A549 (cell line): ENCODE measurements at regions of chr11 and their contacts with region 1.

Region 1: GRCh38 chr11:119205574-119206510 is at the start of gene CBL:
- DNase-seq: peak; percentile 85 to 91
- ATAC-seq: peak; percentile 92 to 93
- H3K4me3 ChIP-seq: peak within 1 kb of the TSS; percentile 98
- H3K27ac ChIP-seq: peak within 1 kb of the TSS; percentile 94 to 99
- H3K4me1 ChIP-seq: peaks cover 21% of the 10 kb centered on the region
- CTCF ChIP-seq: peak; percentile 73
- EP300 ChIP-seq: no peak
- POLR2A ChIP-seq: peak; percentile 27
- RAD21 ChIP-seq: peak in 1 of 2 experiments; percentile 46; a peak in 4 of 5 replicates
- polyA plus RNA-seq, gene CBL: 14.1 and 14.9 TPM in 2 replicates

Region 2: GRCh38 chr11:119185981-119186634 is 19.7 kb before region 1 on chr11:
- CTCF ChIA-PET with region 1: interaction called, 17 read pairs
- POLR2A ChIA-PET with region 1: no interaction called
- DNase-seq: no peak
- ATAC-seq: no peak
- H3K4me3 ChIP-seq: no peak overlapping the region
- H3K27ac ChIP-seq: no peak overlapping the region; a peak in 1 of 6 replicates
- H3K4me1 ChIP-seq: peaks cover 13% of the 10 kb centered on the region
- CTCF ChIP-seq: no peak
- EP300 ChIP-seq: no peak
- POLR2A ChIP-seq: no peak
- RAD21 ChIP-seq: no peak

Region 3: DNA sequence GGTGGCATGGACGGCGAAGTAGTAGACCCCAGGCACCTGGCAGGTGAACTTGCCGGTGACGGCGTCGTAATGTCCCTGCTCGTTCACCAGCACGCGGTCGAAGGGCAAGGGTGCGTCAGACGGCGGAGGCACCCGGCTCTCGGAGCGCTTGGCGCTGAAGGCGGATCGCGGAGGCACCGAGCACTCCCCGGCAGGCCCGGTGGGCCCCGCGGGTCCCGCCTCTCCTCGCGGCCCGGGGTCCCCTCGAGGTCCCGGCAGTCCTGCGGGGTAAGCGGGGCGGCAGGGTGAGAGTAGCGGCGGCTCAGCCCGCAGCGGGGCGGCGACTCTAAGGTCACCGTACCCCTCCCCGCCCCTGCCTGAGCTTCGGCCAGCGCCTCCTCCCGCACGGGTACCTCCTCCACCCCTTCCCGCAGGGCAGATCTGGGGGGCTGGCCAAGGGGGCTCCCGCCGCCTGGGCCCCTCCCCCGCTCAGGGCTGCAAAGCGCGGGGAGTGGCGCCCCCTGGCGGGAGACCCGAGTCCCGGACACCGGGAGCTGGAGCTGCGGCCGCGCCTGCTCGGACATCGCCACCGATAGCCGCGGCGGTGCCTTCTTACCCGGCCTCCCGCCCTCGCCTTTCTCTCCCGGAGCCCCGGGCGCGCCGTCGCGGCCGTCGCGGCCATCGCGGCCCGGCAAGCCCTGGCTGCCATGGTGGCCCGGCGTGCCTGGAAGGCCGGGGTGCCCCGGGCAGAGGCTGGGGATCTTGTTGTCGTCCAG is 133.9 kb after region 1 on chr11:
- CTCF ChIA-PET with region 1: interaction called, 11 read pairs
- POLR2A ChIA-PET with region 1: no interaction called
- DNase-seq: no peak
- ATAC-seq: peak; percentile 64 to 76
- H3K4me3 ChIP-seq: peak overlapping the region; percentile 33
- H3K27ac ChIP-seq: peak overlapping the region; percentile 48 to 90; a peak in 5 of 6 replicates
- H3K4me1 ChIP-seq: peaks cover 19% of the 10 kb centered on the region
- CTCF ChIP-seq: peak; percentile 81
- EP300 ChIP-seq: no peak
- POLR2A ChIP-seq: no peak
- RAD21 ChIP-seq: peak; percentile 29 to 39; a peak in 3 of 5 replicates